Activated naive CD4-positive, alpha-beta T cell treated with anti-CD3 and anti-CD28 coated beads for 36 hours (primary cell): ENCODE measurements at regions of chr4 and their contacts with region 1.

Region 1: GRCh38 chr4:81562093-81562492 is 90.4 kb upstream of the RASGEF1B start:
- DNase-seq: no peak
- H3K4me3 Mint-ChIP-seq: no peak overlapping the region
- H3K27ac Mint-ChIP-seq: no peak overlapping the region
- H3K4me1 Mint-ChIP-seq: peaks cover 21% of the 10 kb centered on the region
- H3K27me3 Mint-ChIP-seq: no peaks in the 10 kb centered on the region

Region 2: DNA sequence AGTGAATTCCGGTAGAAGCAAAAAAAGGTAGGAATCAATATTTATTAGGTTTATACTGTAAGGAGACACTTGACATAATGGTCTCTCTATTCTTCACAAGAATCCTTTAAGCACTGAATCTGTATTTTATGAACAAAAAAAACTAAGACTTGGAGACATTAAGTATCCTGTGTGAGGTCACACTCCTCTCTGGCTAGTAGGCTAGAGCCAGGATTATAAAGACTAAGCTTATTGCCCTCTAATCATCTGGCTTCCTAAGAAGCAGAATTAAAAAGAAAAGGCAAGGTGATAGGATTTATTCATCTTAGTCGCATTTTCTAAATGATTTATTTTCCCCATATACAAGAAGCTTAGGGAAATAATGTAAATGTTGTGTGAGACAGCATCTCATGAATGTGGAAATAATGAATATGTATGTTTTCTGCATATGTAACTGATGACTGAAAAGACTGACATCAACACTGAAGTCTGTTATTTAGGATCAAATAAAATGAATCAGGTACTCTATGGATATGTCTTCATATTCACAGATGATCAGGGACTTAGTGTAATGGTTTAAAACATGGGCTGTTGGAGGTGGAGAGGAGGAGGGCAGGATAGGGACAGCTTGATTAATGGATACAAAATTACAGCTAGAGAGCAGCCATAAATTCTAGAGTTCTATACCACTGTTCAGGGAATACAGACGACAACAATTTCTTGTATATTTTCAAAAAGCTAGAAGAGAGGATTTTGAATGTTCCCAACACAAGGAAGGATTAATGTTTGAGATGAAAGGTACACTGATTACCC is 316.7 kb before region 1 on chr4:
- CTCF ChIA-PET with region 1: no interaction called
- intact Hi-C with region 1: no loop called
- DNase-seq: no peak
- H3K4me3 Mint-ChIP-seq: no peak overlapping the region
- H3K27ac Mint-ChIP-seq: no peak overlapping the region
- H3K4me1 Mint-ChIP-seq: no peaks in the 10 kb centered on the region
- H3K27me3 Mint-ChIP-seq: no peaks in the 10 kb centered on the region

Region 3: GRCh38 chr4:81494031-81494431 is 68.1 kb before region 1 on chr4:
- CTCF ChIA-PET with region 1: no interaction called
- intact Hi-C with region 1: loop called (anchors 1 kb)
- DNase-seq: no peak
- H3K4me3 Mint-ChIP-seq: no peak overlapping the region
- H3K27ac Mint-ChIP-seq: peak overlapping the region; percentile 30
- H3K4me1 Mint-ChIP-seq: peaks cover 46% of the 10 kb centered on the region
- H3K27me3 Mint-ChIP-seq: no peaks in the 10 kb centered on the region